ENCODE measurements at regions of chr2 and their contacts with region 1.

Region 1: GRCh38 chr2:178414266-178415247 is 36.4 kb downstream of the PRKRA start:
- DNase-seq: peak; percentile 93 to 95
- ATAC-seq: peak; percentile 91 to 92
- H3K4me3 ChIP-seq: peak overlapping the region; percentile 62 to 77 (median 68)
- H3K27ac ChIP-seq: peak overlapping the region; percentile 82 to 88 (median 86)
- H3K4me1 ChIP-seq: peaks cover 8 to 14% of the 10 kb centered on the region in 2 donors
- H3K27me3 ChIP-seq: no peaks in the 10 kb centered on the region
- CTCF ChIP-seq: peak; percentile 85 to 93 (median 89)
- POLR2A ChIP-seq: peak; percentile 31 to 73

Region 2: GRCh38 chr2:178128836-178129630 is 285.5 kb before region 1 on chr2:
- in situ Hi-C with region 1: no loop called
- intact Hi-C with region 1: loop called (anchors 2 kb)
- DNase-seq: no peak
- ATAC-seq: peak; percentile 64 to 81
- H3K4me3 ChIP-seq: no peak overlapping the region
- H3K27ac ChIP-seq: peak overlapping the region; percentile 25 to 55 (median 44)
- H3K4me1 ChIP-seq: peaks cover 9 to 18% of the 10 kb centered on the region in 2 donors
- H3K27me3 ChIP-seq: no peaks in the 10 kb centered on the region
- CTCF ChIP-seq: no peak
- POLR2A ChIP-seq: no peak

Region 3: GRCh38 chr2:178298785-178299212 is 115.8 kb before region 1 on chr2:
- in situ Hi-C with region 1: no loop called
- intact Hi-C with region 1: loop called (anchors 5 kb)
- DNase-seq: no peak
- ATAC-seq: peak; percentile 43 to 68
- H3K4me3 ChIP-seq: no peak overlapping the region
- H3K27ac ChIP-seq: peak overlapping the region; percentile 55 to 87 (median 70)
- H3K4me1 ChIP-seq: peaks cover 40 to 42% of the 10 kb centered on the region in 2 donors
- H3K27me3 ChIP-seq: no peaks in the 10 kb centered on the region
- CTCF ChIP-seq: no peak
- POLR2A ChIP-seq: no peak

Region 4: DNA sequence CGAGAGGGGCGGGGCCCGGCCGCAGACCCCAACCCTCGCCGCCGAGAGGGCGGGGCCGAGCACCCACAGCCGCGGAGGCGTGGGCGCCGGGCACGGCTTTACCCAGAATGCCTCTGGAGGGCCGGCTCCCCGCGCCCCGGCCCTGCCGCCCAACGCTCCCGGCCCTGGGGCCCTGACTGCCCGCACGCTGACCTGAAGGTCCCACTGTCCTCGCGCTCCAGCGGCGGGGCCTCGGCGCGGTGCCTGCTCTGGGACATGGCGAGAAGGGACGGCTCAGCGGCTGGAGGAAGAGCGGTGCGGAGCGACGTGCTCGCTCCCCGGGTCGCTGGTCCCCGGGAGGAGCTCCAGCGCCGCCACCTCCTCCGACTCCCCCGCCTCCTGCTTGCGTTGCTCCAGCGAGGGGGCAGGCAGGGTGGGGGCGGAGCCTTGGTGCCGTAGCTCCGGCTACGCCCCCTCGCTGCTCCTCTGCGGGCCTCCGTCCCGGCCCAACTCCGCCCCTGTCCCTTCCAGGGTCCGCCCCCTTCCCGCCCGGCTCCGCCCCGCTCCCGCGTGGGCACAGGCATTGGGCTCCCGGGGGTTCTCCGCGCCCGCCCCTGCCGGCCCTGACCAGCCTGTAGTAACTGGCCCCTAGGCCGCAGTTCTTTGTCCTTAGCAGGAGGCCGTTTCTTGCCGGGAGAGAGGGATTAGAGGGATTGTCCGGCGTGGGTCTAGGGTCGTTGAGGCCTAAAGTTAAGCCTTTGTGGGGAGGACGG is 36.4 kb after region 1 on chr2 and contains the starts of genes PJVK and PRKRA:
- in situ Hi-C with region 1: no loop called
- intact Hi-C with region 1: loop called (anchors 2 kb)
- DNase-seq: peak; percentile 96 to 97
- ATAC-seq: peak; percentile 82 to 84
- H3K4me3 ChIP-seq: peak within 1 kb of the TSS; percentile 69 to 97 (median 90)
- H3K27ac ChIP-seq: peak within 1 kb of the TSS; percentile 88 to 100 (median 98)
- H3K4me1 ChIP-seq: peaks cover 26 to 27% of the 10 kb centered on the region in 2 donors
- H3K27me3 ChIP-seq: no peaks in the 10 kb centered on the region
- CTCF ChIP-seq: peak in 1 of 5 experiments; percentile 17
- POLR2A ChIP-seq: peak; percentile 97
- total RNA-seq, gene PJVK: 0.16 to 3.9 (median 1.0) TPM
- total RNA-seq, gene PRKRA: 91.0 to 125 (median 117) TPM

Measured in gastrocnemius medialis (tissue), 4 donors.